Dorsolateral prefrontal cortex (tissue), 120 donors: ENCODE measurements at regions of chr7 and their contacts with region 1.

Region 1: GRCh38 chr7:143214789-143215679 is 6.8 kb upstream of the TAS2R40 start:
- DNase-seq: peak in 4 of 10 donors; percentile 46 to 67 (median 50)
- H3K4me3 ChIP-seq: no peak overlapping the region
- H3K27ac ChIP-seq: peak overlapping the region in 52 of 59 donors; percentile 2 to 86 (median 62)
- H3K27me3 ChIP-seq: no peaks in the 10 kb centered on the region
- CTCF ChIP-seq: peak; percentile 98 to 100 (median 100)

Region 2: DNA sequence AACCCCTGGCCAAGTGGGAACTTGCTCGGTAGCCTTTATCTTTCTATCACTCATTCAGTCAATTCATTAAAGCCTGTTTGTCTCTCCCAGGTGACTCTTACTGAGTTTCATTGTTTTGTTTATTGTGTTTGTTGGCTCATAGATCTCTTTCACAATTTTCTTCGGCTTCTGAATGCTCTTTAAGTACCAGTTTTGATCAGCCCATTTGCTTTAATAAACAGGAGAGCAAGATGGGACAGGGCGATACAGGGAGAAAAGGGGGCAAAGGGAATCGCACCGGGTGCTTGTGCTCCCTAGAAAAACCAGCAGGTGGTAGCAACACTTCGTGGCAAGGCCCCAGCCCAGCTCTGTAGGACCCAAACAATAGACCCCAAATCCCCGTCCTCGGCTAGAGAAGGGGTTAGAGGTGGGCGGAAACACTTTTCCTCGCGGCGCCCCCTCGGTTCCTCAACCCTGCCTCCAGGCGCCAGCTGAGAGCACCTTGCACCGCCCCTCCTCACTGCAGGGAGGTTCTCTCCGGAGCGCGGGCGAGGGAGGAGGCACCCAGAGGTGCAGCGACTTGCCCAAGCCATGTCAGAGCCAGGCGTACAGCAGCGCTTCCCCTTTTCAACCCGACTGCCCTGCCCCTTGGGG is 361.2 kb before region 1 on chr7:
- intact Hi-C with region 1: loop called (anchors 2 to 5 kb)
- DNase-seq: peak in 5 of 10 donors; percentile 52 to 74 (median 67)
- H3K4me3 ChIP-seq: peak overlapping the region; percentile 52 to 89 (median 76)
- H3K27ac ChIP-seq: peak overlapping the region in 57 of 59 donors; percentile 15 to 93 (median 82)
- H3K27me3 ChIP-seq: no peaks in the 10 kb centered on the region
- CTCF ChIP-seq: peak; percentile 46 to 88 (median 76)

Region 3: GRCh38 chr7:143013893-143014292 is 201.1 kb before region 1 on chr7:
- intact Hi-C with region 1: loop called in 1 of 2 experiments (anchors 5 kb)
- DNase-seq: no peak
- H3K4me3 ChIP-seq: no peak overlapping the region
- H3K27ac ChIP-seq: peak overlapping the region in 56 of 59 donors; percentile 17 to 89 (median 70)
- H3K27me3 ChIP-seq: no peaks in the 10 kb centered on the region
- CTCF ChIP-seq: no peak

Region 4: DNA sequence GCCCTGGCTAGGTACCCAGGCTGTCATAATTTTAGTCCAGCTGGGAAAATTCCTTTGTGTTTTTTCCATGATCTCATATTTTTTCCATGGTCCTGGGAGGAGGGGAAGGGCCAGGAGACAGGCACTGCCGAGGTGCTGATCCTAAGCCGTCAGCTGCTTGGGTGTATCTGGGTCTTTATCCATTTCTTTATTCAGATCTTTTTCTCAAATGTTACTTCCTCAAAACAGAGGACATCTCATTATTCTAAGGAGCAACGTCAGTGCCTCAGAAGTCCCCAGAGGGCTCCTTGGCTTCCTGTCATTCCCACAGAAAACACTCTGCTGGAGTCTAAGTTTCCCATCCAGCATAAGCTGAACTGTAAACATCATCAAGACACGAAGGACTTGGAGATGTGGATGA is 165.7 kb before region 1 on chr7:
- intact Hi-C with region 1: no loop called
- DNase-seq: no peak
- H3K4me3 ChIP-seq: no peak overlapping the region
- H3K27ac ChIP-seq: peak overlapping the region in 14 of 59 donors; percentile 5 to 59 (median 32)
- H3K27me3 ChIP-seq: no peaks in the 10 kb centered on the region
- CTCF ChIP-seq: no peak

Region 5: GRCh38 chr7:143229054-143229790 is 14.2 kb after region 1 on chr7:
- intact Hi-C with region 1: no loop called
- DNase-seq: peak in 1 of 10 donors; percentile 39
- H3K4me3 ChIP-seq: peak overlapping the region in 2 of 59 donors; percentile 2 to 13
- H3K27ac ChIP-seq: peak overlapping the region in 19 of 59 donors; percentile 1 to 51 (median 26)
- H3K27me3 ChIP-seq: no peaks in the 10 kb centered on the region
- CTCF ChIP-seq: peak in 1 of 56 donors; percentile 12